Dendritic cell treated with granulocyte-macrophage colony-stimulating factor and Interleukin-4, amounts not matched to agents 40 ng/mL and 50 ng/mL, for 4 days (primary cell): ENCODE measurements at regions of chr1 and their contacts with region 1.

Region 1: GRCh38 chr1:167401260-167401873 is 117.0 kb downstream of the CD247 start:
- H3K4me3 Mint-ChIP-seq: no peak overlapping the region
- H3K27ac Mint-ChIP-seq: no peak overlapping the region
- H3K4me1 Mint-ChIP-seq: no peaks in the 10 kb centered on the region
- H3K27me3 Mint-ChIP-seq: no peaks in the 10 kb centered on the region

Region 2: GRCh38 chr1:167207940-167208623 is 193.3 kb before region 1 on chr1:
- intact Hi-C with region 1: no loop called
- H3K4me3 Mint-ChIP-seq: peak overlapping the region; percentile 42
- H3K27ac Mint-ChIP-seq: no peak overlapping the region
- H3K4me1 Mint-ChIP-seq: no peaks in the 10 kb centered on the region
- H3K27me3 Mint-ChIP-seq: peaks cover 2% of the 10 kb centered on the region

Region 3: GRCh38 chr1:167273027-167273800 is 128.2 kb before region 1 on chr1:
- intact Hi-C with region 1: loop called (anchors 5 kb)
- H3K4me3 Mint-ChIP-seq: no peak overlapping the region
- H3K27ac Mint-ChIP-seq: no peak overlapping the region
- H3K4me1 Mint-ChIP-seq: peaks cover 63% of the 10 kb centered on the region
- H3K27me3 Mint-ChIP-seq: no peaks in the 10 kb centered on the region

Region 4: DNA sequence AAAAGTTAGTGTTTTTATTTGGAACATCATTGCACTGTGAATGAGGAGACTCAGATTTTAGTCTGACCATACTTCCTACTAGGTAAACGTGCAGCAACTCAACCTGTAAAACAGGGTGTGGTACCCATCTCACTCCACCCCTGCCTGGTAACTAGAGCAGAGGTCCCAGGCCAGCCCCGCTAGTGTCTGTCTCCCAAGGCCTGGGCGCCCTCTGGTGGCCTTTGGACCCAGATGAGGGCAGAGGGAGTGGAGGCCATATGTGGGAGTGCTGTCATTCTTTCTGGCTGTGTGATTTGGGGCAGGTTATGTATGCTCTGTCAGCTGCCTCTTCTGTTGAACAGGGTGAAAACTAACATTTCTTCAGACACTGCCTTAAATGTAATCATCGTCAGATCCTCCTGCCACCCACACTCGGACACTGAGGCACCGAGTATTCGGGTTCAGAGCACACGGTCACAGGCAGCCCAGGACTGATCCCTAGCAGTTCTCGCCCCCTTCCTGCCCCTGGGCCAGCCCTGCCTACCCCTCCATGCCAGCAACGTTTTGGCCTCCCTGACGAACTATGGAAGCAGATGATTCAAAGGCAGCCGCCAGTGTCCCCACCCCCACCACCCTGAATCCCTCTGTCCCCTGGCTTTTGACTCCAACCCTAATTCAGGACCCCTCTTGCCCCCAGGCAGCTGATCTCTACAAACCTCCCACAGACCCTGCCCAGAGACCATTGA is 40.9 kb after region 1 on chr1:
- intact Hi-C with region 1: loop called (anchors 2 kb)
- H3K4me3 Mint-ChIP-seq: no peak overlapping the region
- H3K27ac Mint-ChIP-seq: peak overlapping the region; percentile 54
- H3K4me1 Mint-ChIP-seq: peaks cover 43% of the 10 kb centered on the region
- H3K27me3 Mint-ChIP-seq: peaks cover 27% of the 10 kb centered on the region

Region 5: GRCh38 chr1:167533851-167534300 is 132.5 kb after region 1 on chr1:
- intact Hi-C with region 1: loop called (anchors 1 kb)
- H3K4me3 Mint-ChIP-seq: no peak overlapping the region
- H3K27ac Mint-ChIP-seq: no peak overlapping the region
- H3K4me1 Mint-ChIP-seq: peaks cover 31% of the 10 kb centered on the region
- H3K27me3 Mint-ChIP-seq: no peaks in the 10 kb centered on the region

Region 6: GRCh38 chr1:167553136-167554027 is 152.0 kb after region 1 on chr1 and contains the start of gene CREG1:
- intact Hi-C with region 1: loop called (anchors 5 kb)
- H3K4me3 Mint-ChIP-seq: peak within 1 kb of the TSS; percentile 92
- H3K27ac Mint-ChIP-seq: peak within 1 kb of the TSS; percentile 87
- H3K4me1 Mint-ChIP-seq: peaks cover 53% of the 10 kb centered on the region
- H3K27me3 Mint-ChIP-seq: no peaks in the 10 kb centered on the region